ENCODE measurements at regions of chr4 and their contacts with region 1.

Region 1: GRCh38 chr4:31458813-31459212 is 738.6 kb downstream of the PCDH7 start:
- DNase-seq: no peak
- ATAC-seq: no peak
- H3K4me3 ChIP-seq: no peak overlapping the region
- H3K27ac ChIP-seq: no peak overlapping the region
- H3K4me1 ChIP-seq: peaks cover 13% of the 10 kb centered on the region
- H3K27me3 ChIP-seq: no peaks in the 10 kb centered on the region
- CTCF ChIP-seq: no peak

Region 2: DNA sequence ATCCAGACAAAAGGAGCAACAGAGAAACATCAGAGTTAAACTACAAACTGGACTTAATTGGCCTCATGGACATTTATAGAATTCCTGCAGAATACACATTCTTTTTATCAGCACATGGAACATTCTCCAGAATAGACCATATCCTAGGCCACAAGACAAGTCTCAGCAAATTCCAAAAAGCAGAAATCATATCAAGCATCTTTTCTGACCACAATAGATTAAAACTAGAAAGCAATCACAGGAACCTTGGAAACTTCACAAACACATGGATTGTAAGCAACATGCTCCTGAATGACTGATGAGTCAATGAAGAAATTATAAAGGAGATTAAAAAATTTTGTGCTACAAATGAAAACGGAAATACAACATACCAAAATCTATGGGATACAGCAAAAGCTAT is 212.0 kb before region 1 on chr4:
- CTCF ChIA-PET with region 1: no interaction called
- POLR2A ChIA-PET with region 1: no interaction called
- intact Hi-C with region 1: no loop called
- DNase-seq: no peak
- ATAC-seq: no peak
- H3K4me3 ChIP-seq: no peak overlapping the region
- H3K27ac ChIP-seq: no peak overlapping the region
- H3K4me1 ChIP-seq: no peaks in the 10 kb centered on the region
- H3K27me3 ChIP-seq: no peaks in the 10 kb centered on the region
- CTCF ChIP-seq: no peak

Region 3: GRCh38 chr4:31328932-31329331 is 129.9 kb before region 1 on chr4:
- CTCF ChIA-PET with region 1: no interaction called
- POLR2A ChIA-PET with region 1: no interaction called
- intact Hi-C with region 1: no loop called
- DNase-seq: no peak
- ATAC-seq: no peak
- H3K4me3 ChIP-seq: no peak overlapping the region
- H3K27ac ChIP-seq: no peak overlapping the region
- H3K4me1 ChIP-seq: peaks cover 7% of the 10 kb centered on the region
- H3K27me3 ChIP-seq: no peaks in the 10 kb centered on the region
- CTCF ChIP-seq: no peak

Region 4: GRCh38 chr4:31411565-31411964 is 47.2 kb before region 1 on chr4:
- CTCF ChIA-PET with region 1: no interaction called
- POLR2A ChIA-PET with region 1: no interaction called
- intact Hi-C with region 1: loop called (anchors 5 kb)
- DNase-seq: peak; percentile 42
- ATAC-seq: peak; percentile 86
- H3K4me3 ChIP-seq: no peak overlapping the region
- H3K27ac ChIP-seq: peak overlapping the region; percentile 21; the same call in 1 of the 2 replicates
- H3K4me1 ChIP-seq: no peaks in the 10 kb centered on the region
- H3K27me3 ChIP-seq: no peaks in the 10 kb centered on the region
- CTCF ChIP-seq: no peak

Region 5: GRCh38 chr4:31442236-31442635 is 16.6 kb before region 1 on chr4:
- CTCF ChIA-PET with region 1: no interaction called
- POLR2A ChIA-PET with region 1: no interaction called
- intact Hi-C with region 1: no loop called
- DNase-seq: no peak
- ATAC-seq: no peak
- H3K4me3 ChIP-seq: no peak overlapping the region
- H3K27ac ChIP-seq: no peak overlapping the region
- H3K4me1 ChIP-seq: no peaks in the 10 kb centered on the region
- H3K27me3 ChIP-seq: no peaks in the 10 kb centered on the region
- CTCF ChIP-seq: no peak

Region 6: GRCh38 chr4:31518796-31519250 is 60.0 kb after region 1 on chr4:
- CTCF ChIA-PET with region 1: no interaction called
- POLR2A ChIA-PET with region 1: no interaction called
- intact Hi-C with region 1: loop called (anchors 10 kb)
- DNase-seq: peak; percentile 80
- ATAC-seq: peak; percentile 91
- H3K4me3 ChIP-seq: peak overlapping the region; percentile 24; the same call in 1 of the 2 replicates
- H3K27ac ChIP-seq: peak overlapping the region; percentile 63
- H3K4me1 ChIP-seq: peaks cover 12% of the 10 kb centered on the region
- H3K27me3 ChIP-seq: no peaks in the 10 kb centered on the region
- CTCF ChIP-seq: no peak

Region 7: GRCh38 chr4:31674313-31674947 is 215.6 kb after region 1 on chr4:
- CTCF ChIA-PET with region 1: no interaction called
- POLR2A ChIA-PET with region 1: no interaction called
- intact Hi-C with region 1: loop called (anchors 5 kb)
- DNase-seq: peak; percentile 54
- ATAC-seq: peak; percentile 54; the same call in 1 of the 2 replicates
- H3K4me3 ChIP-seq: no peak overlapping the region
- H3K27ac ChIP-seq: no peak overlapping the region
- H3K4me1 ChIP-seq: no peaks in the 10 kb centered on the region
- H3K27me3 ChIP-seq: no peaks in the 10 kb centered on the region
- CTCF ChIP-seq: peak; percentile 53

Region 8: DNA sequence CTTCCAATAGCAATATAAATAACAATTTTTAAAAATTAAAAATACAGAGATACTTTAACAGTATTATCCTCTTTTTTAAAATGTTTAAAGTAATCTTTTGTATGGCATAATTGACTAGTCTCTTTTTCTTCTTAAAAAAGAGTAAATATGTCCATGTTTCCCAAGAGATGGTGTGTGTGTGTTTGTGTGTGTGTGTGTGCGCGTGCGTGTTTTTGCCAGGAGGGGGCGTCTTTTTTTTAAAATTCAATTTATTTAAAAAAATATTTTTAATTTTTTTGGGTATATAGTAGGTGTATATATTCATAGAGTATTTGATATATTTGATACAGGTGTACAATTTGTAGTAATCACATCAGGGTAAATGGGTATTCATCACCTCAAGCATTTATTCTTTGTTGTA is 335.1 kb after region 1 on chr4:
- CTCF ChIA-PET with region 1: no interaction called
- POLR2A ChIA-PET with region 1: no interaction called
- intact Hi-C with region 1: no loop called
- DNase-seq: peak; percentile 7
- ATAC-seq: no peak
- H3K4me3 ChIP-seq: no peak overlapping the region
- H3K27ac ChIP-seq: no peak overlapping the region
- H3K4me1 ChIP-seq: no peaks in the 10 kb centered on the region
- H3K27me3 ChIP-seq: no peaks in the 10 kb centered on the region
- CTCF ChIP-seq: 0 out of 2 replicates have a peak, but pooled peaks have one; percentile 12